AG04449 (cell line): ENCODE measurements at regions of chr7 and their contacts with region 1.

Region 1: GRCh38 chr7:124856299-124856888 is 73.2 kb downstream of the POT1 start:
- DNase-seq: no peak
- H3K4me3 ChIP-seq: no peak overlapping the region
- CTCF ChIP-seq: peak; percentile 33

Region 2: GRCh38 chr7:124701955-124702354 is 154.4 kb before region 1 on chr7:
- CTCF ChIA-PET with region 1: no interaction called
- POLR2A ChIA-PET with region 1: no interaction called
- DNase-seq: no peak
- H3K4me3 ChIP-seq: no peak overlapping the region
- CTCF ChIP-seq: no peak

Region 3: GRCh38 chr7:124874644-124875163 is 18.3 kb after region 1 on chr7:
- CTCF ChIA-PET with region 1: interaction called, 26 read pairs
- POLR2A ChIA-PET with region 1: no interaction called
- DNase-seq: no peak
- H3K4me3 ChIP-seq: no peak overlapping the region
- CTCF ChIP-seq: no peak

Region 4: GRCh38 chr7:124959676-124960075 is 103.3 kb after region 1 on chr7:
- CTCF ChIA-PET with region 1: no interaction called
- POLR2A ChIA-PET with region 1: no interaction called
- DNase-seq: no peak
- H3K4me3 ChIP-seq: no peak overlapping the region
- CTCF ChIP-seq: no peak